ENCODE measurements at regions of chr1 and their contacts with region 1.

Region 1: DNA sequence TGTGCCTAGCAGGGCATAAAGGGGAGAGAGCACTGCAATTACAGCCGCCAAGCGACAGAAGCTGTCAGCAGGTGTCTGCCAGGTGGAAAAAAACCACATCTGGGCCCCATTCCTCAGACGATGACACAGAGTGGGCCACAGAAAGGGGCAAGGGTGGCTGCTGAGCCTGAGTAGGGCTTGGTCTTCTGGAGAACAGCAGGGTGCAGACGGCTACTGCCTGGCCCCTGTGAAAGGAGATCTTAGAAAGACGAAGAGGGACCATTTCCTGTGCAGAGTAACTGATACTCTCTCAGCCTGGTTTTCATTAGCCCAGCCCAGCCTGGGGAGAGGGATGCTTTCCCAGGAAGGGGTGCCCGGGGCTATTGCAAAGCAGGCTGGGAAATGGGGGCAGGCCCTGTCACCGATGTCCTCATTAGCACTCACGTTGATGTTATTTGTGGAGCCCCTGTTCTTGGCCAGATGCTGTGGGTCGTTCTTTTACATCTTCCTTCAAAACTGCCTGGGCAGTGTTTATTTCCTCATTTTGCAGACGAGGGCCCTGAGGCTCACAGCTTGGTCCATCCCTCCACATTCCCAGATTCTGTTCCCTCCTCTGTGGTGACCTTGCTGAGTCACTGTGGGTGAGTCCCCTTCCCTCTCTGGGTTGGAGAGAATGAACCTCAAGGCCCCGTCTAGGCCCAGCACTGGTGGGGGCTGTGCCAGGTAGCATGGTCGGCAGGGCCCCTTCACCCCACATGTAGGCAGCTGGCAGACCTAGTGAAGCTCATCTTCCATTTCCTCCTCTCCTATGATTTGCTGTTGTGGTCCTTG is 472.8 kb downstream of the PTPRU start:
- DNase-seq: peak; percentile 86
- H3K4me3 ChIP-seq: no peak overlapping the region
- H3K27ac ChIP-seq: peak overlapping the region; percentile 85
- H3K4me1 ChIP-seq: peaks cover 58% of the 10 kb centered on the region
- H3K27me3 ChIP-seq: no peaks in the 10 kb centered on the region
- CTCF ChIP-seq: no peak

Region 2: DNA sequence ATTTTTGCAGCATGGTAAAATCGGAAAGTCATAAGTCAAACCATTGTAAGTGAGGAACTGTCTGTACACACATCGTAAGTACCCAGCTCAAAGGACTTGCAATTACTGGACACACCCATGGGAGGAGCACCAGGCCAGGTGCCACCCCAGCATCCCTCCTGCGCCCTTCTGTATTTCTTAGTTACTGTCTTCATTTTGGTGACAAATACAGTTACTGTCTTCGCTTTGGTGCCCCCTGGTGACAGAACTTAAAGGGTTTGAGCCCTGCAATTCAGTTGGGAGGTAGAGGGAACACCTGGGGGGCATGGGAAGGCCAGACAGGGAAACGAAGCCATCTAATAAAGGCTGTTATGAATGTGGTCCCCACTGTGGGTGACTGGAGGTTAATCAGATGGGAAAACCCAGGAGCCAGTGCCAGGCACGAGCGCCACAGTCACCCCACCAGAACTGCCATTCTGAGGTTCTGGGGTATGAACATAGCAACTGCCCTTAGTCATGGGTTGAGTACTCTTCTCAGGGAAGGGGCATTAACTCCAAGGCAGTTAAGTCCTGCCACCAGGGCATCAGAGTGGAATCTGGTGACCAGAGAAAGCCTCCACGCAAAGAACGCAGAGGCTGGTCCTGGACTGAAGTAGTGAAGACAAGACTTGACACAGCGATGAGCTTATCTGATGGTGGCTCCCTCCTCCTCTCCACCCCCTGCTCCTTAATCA is 140.1 kb after region 1 on chr1:
- CTCF ChIA-PET with region 1: no interaction called
- dilution Hi-C with region 1: no loop called
- in situ Hi-C with region 1: no loop called
- intact Hi-C with region 1: loop called (anchors 1 kb)
- DNase-seq: peak; percentile 41
- H3K4me3 ChIP-seq: no peak overlapping the region
- H3K27ac ChIP-seq: no peak overlapping the region
- H3K4me1 ChIP-seq: no peaks in the 10 kb centered on the region
- H3K27me3 ChIP-seq: peaks cover 2% of the 10 kb centered on the region
- CTCF ChIP-seq: peak; percentile 49 to 65

Measured in mammary epithelial cell (primary cell).